ENCODE measurements at regions of chr22 and their contacts with region 1.

Region 1: GRCh38 chr22:35430897-35431322 is 31.0 kb downstream of the MCM5 start:
- DNase-seq: peak; percentile 75 to 93
- H3K4me3 ChIP-seq: no peak overlapping the region
- H3K27ac ChIP-seq: no peak overlapping the region
- H3K4me1 ChIP-seq: peaks cover 24% of the 10 kb centered on the region
- H3K27me3 ChIP-seq: no peaks in the 10 kb centered on the region
- CTCF ChIP-seq: peak; percentile 98

Region 2: GRCh38 chr22:35489239-35489638 is 58.3 kb after region 1 on chr22:
- CTCF ChIA-PET with region 1: interaction called, 10 read pairs
- POLR2A ChIA-PET with region 1: no interaction called
- intact Hi-C with region 1: no loop called
- DNase-seq: peak; percentile 53 to 59
- H3K4me3 ChIP-seq: no peak overlapping the region
- H3K27ac ChIP-seq: no peak overlapping the region
- H3K4me1 ChIP-seq: peaks cover 9% of the 10 kb centered on the region; the same call in 1 of the 2 replicates
- H3K27me3 ChIP-seq: no peaks in the 10 kb centered on the region
- CTCF ChIP-seq: no peak

Region 3: GRCh38 chr22:35510481-35510934 is 79.6 kb after region 1 on chr22:
- CTCF ChIA-PET with region 1: no interaction called
- POLR2A ChIA-PET with region 1: no interaction called
- intact Hi-C with region 1: no loop called
- DNase-seq: peak in 1 of 2 experiments; percentile 25
- H3K4me3 ChIP-seq: no peak overlapping the region
- H3K27ac ChIP-seq: no peak overlapping the region
- H3K4me1 ChIP-seq: peaks cover 15% of the 10 kb centered on the region
- H3K27me3 ChIP-seq: peaks cover 5% of the 10 kb centered on the region; the same call in 1 of the 2 replicates
- CTCF ChIP-seq: no peak

Region 4: DNA sequence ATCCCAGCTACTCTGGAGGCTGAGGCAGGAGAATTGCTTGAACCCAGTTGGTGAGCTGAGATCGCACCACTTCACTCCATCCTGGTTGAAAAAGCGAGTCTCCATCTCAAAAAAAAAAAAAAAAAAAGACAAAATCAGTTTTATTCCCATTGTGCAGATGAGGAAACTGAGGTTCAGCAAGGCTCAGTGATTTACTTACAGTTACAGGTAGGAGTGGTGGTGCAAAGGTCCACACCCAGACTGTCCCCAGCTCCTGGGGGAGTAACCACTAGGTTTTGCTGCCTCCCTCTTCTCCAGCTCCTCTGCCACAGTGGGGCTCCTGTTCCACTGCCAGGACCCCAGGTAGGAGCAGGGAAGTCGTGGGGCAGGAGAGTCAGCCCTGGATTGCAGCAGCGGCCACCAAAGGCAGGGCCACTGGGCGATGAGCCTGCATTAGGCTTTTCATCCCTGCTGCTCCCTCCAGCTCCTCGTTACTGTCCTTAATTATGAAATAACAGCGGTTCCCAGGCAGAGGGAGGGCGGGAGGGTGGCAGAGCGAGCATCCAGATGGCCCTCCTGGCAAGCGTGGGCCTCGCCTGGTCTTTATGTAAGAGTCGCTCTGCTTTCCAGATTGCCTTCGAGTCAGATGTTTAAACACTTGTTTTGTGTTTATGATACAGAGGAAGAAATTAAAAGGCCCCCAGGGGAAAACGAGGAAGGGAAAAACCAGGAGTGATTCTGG is 94.2 kb after region 1 on chr22:
- CTCF ChIA-PET with region 1: no interaction called
- POLR2A ChIA-PET with region 1: no interaction called
- intact Hi-C with region 1: no loop called
- DNase-seq: no peak
- H3K4me3 ChIP-seq: no peak overlapping the region
- H3K27ac ChIP-seq: no peak overlapping the region
- H3K4me1 ChIP-seq: no peaks in the 10 kb centered on the region
- H3K27me3 ChIP-seq: no peaks in the 10 kb centered on the region
- CTCF ChIP-seq: no peak

Region 5: GRCh38 chr22:35589071-35589952 is 158.4 kb after region 1 on chr22:
- CTCF ChIA-PET with region 1: interaction called, 10 read pairs
- POLR2A ChIA-PET with region 1: no interaction called
- intact Hi-C with region 1: no loop called
- DNase-seq: peak; percentile 96 to 100
- H3K4me3 ChIP-seq: peak overlapping the region; percentile 62; the same call in 1 of the 2 replicates
- H3K27ac ChIP-seq: peak overlapping the region; percentile 98
- H3K4me1 ChIP-seq: peaks cover 90% of the 10 kb centered on the region
- H3K27me3 ChIP-seq: no peaks in the 10 kb centered on the region
- CTCF ChIP-seq: no peak

Region 6: DNA sequence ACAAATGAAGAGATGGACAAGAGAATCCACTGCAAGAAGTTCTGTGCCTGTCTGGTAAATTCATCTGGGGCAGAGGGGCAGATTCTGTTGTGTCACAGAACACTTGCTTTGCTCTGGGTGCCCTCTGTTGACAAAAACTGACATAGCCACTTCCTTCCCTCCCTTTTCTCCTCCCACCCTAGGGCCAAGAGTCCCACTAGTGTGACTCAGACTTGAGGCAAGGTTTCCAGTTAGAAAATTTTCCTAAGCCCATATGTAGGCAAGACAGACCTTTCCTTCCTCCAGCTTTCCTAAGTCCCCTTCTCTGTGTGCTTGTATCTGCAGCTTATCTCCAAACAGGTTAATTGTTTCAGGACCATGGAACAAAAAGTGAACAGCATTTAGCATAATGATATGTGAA is 490.9 kb after region 1 on chr22:
- CTCF ChIA-PET with region 1: no interaction called
- POLR2A ChIA-PET with region 1: no interaction called
- intact Hi-C with region 1: loop called (anchors 1 kb)
- DNase-seq: peak; percentile 77 to 86
- H3K4me3 ChIP-seq: no peak overlapping the region
- H3K27ac ChIP-seq: peak overlapping the region; percentile 71
- H3K4me1 ChIP-seq: peaks cover 30% of the 10 kb centered on the region
- H3K27me3 ChIP-seq: no peaks in the 10 kb centered on the region
- CTCF ChIP-seq: peak; percentile 72

Region 7: DNA sequence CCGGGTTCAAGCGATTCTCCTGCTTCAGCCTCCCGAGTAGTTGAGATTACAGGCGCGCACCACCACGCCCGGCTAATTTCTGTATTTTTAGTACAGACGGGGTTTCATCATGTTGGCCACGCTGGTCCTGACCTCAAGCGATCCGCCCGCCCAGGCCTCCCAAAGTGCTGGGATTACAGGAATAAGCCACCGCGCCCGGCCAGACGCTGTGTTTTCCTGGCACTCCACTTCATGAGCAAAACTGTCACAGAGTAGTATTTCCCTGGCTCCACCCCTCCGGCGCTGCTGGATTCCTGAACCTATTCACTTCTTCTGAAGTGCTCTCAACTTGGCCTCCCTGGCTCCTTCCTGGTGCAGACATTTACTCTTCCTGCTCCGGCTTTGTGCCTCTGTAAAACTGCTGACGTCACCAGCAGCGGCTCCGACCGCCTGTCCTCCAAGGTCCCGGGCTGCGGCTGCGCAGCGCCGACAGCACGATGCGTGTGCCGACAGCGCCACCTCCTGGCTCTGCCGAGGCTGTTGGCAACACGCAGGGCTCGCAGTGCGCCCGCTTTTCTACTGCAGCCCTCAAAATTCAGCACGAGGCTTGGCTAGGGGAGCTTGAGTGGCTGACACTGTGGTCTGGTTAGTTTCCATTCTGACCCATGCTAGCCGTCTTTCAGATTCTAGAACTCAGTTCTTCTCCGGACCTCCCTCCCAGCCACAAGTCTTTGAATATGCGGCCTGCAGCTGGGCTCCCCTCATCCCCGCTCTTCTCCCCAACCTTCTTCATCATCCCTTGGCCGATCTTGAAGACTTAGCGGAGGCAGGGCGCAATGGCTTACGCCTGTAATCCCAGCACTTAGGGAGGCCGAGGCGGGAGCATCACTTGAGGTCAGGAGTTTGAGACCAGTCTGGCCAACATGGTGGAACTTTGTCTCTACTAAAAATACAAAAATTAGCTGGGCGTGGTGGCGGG is 693.0 kb after region 1 on chr22:
- CTCF ChIA-PET with region 1: interaction called, 4 read pairs
- POLR2A ChIA-PET with region 1: no interaction called
- intact Hi-C with region 1: loop called (anchors 1 kb)
- DNase-seq: peak; percentile 94 to 97
- H3K4me3 ChIP-seq: peak overlapping the region; percentile 50
- H3K27ac ChIP-seq: peak overlapping the region; percentile 76
- H3K4me1 ChIP-seq: peaks cover 8% of the 10 kb centered on the region
- H3K27me3 ChIP-seq: 0 out of 2 replicates have a peak, but pooled peaks cover 3% of the 10 kb centered on the region
- CTCF ChIP-seq: peak; percentile 99